Sciatic nerve (tissue), 2 donors: ENCODE measurements at regions of chr20 and their contacts with region 1.

Region 1: DNA sequence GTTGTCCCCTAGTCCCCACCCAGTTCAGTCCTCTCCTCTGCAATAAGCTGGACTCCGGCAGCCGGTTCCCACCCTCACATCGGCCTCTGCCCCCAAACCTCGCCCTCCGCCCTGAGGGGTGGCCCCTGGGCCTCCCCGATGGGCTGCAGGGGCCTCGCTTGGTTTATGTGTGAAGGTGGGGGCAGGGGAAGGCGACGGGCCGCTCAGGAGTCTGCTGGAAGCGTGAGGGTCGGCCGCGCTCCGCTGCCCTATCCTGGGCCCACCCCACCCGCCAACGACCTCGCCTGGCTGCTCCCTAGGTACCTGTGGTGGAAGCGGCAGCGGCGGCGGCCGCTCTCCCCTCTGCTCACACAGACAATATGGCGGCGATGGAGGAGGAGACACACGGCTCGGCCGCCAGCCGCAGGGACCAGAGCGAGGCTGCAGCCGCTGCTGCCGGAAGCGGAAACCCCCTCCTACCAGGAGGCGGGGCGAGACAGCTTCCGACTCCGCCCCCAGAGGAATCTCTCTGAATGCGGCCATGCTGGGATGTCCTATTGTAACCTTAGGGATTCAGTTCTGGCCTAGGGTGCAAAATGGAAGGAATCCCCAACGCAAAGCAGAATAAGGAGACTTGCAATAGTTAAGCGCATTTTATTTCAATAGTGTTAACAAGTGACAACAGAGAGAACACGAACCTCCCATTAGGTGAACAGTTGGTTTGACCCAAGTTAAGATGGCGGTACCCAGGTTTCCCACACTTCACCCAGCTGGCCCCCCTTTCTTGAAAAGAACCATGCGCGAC is at the start of gene CSNK2A1:
- DNase-seq: peak; percentile 97
- ATAC-seq: peak; percentile 99
- total RNA-seq, gene CSNK2A1: 91.4 TPM

Region 2: DNA sequence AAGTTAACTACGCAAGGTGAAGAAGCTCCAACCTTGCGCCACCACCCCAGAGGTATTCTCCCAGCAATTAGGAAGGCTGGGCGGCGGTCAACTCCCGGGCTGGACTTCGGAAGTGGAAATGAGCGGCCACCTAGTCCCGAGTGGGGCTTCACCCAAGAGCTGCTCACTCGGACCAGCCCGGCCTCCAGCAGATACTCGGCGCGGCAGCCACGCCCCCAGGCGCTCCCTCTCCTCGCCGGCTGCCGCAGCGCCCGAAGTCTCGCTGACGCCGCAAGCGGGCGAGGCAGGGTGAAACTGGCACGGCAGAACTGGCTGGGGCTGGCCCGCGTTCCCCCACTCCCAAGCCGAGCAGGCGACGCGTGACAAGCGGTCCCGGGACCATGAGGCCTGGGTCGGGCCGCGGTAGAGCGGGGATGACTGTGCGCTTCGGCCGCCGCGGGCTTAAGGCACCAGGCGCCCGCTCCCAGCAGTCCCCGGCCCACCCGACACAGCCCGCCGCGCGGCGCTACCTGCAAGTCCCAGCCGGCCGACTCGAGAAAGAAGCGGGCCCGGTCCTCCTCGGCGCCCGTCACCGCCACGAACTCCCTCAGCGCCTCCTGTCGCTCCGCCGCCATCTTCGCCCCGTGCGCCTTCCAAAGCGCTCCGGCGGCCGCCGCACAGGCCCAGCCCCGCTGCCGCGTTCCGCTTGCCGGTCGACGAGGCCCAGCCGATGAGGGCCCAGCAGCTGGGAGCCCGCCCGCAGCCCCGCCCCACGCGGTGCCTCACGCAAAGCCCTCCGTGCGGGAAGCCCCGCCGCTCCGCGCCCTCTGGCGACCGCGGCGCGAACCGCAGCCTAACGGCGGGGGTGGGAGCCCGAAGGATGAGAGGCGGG is 922.9 kb after region 1 on chr20 and contains the start of gene NSFL1C:
- intact Hi-C with region 1: loop called (anchors 5 kb)
- DNase-seq: peak; percentile 97
- ATAC-seq: peak; percentile 98
- total RNA-seq, gene NSFL1C: 77.9 TPM